Activated CD8-positive, alpha-beta T cell treated with anti-CD3 and anti-CD28 coated beads, Interleukin-2, amount 10 ng/mL, durations not matched to agents 7 days and 5 days (primary cell): ENCODE measurements at regions of chr5 and their contacts with region 1.

Region 1: GRCh38 chr5:73591102-73591695 is 25.7 kb downstream of the UTP15 start:
- DNase-seq: peak; percentile 75
- ATAC-seq: peak; percentile 71
- H3K4me3 Mint-ChIP-seq: no peak overlapping the region
- H3K27ac Mint-ChIP-seq: no peak overlapping the region
- H3K4me1 Mint-ChIP-seq: no peaks in the 10 kb centered on the region
- H3K27me3 Mint-ChIP-seq: peaks cover 2% of the 10 kb centered on the region

Region 2: DNA sequence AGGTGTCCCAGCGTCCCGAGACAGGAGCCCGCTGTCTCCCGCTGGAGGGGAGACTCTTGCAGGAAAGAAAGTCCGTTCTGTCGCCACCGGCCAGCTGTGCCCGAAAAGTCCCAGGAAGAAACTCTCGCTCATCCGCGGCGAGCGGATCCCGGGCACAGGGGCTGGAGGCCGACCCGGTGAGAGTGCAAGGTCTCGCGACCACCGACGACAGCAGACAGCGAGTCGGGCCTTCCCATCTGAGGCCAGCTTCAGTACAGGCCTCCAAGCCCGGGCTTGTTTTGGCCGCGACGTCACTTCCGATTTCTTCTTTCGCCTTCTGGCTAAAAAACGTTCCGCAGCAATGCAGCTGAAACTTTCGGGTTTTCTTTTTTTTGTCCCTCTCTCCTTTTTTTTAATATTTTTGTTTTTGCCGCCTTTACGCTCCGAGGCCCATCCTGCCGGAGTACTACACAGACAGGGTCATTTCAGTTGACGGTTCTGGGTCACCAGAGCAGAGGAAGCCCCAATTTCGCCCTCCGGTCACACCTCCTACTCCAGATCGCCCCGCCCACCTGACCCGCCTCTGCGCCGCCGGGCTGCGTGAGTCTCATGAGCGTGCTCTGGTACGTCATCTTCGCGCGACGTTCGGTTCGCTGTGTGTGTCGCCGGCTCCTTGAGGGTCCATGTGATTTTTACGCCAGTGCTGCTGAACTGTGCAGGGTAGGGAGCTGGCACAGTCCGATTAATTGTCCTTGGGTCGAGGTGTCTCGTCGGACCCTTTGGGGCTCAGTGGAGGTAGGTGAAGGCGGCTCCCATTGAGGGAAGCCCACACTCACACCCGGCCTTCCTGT is 25.8 kb before region 1 on chr5 and contains the starts of genes ANKRA2 and UTP15:
- CTCF ChIA-PET with region 1: interaction called, 14 read pairs
- POLR2A ChIA-PET with region 1: no interaction called
- DNase-seq: peak; percentile 99
- ATAC-seq: peak; percentile 93
- H3K4me3 Mint-ChIP-seq: peak within 1 kb of the TSS; percentile 91
- H3K27ac Mint-ChIP-seq: peak within 1 kb of the TSS; percentile 99
- H3K4me1 Mint-ChIP-seq: peaks cover 41% of the 10 kb centered on the region
- H3K27me3 Mint-ChIP-seq: no peaks in the 10 kb centered on the region
- total RNA-seq, gene ANKRA2: 12.4 to 13.4 TPM
- total RNA-seq, gene UTP15: 22.9 to 23.8 TPM

Region 3: DNA sequence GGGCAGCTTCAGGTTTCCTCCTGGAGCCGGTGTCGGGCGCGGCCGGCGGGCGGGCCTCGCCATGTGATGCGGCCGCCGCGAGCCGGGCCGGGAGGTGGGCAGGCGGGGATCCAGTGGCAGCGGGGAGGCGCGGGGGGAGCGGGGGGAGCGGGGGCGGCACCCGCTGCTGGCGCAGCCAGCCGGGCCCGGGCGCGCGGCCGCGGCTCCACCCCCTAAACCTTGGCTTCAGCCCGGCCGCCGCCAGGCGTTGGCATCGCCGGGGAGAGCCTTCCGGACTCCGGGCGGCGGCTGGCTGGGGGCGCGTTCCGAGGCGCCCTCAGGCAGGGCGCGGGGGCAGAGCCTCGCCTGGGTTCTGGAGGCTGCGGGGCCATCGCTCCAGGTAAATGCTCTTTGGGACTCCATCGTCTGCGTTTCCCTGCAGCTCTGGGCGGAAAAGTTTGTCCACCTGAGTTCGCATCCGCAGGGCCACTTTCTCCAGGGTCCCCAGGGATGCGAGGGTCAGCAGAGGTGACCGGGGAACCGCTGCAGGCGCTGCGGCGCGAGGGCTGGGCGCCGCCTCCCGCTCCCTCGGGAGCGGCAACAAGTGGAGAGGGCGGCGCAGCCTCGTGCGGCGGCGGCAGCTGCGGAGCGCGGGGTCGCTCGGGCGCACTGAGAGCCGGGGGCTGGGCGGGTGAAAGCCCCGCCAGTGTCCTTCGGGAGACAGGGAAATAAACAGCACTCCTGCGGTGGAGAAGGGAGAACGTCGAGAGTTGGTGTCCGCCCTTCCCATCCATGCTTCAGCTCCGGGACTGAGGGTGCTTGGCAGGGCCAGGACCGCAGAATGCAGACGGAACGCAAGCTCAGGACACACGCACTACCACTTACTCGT is 35.0 kb after region 1 on chr5 and contains the start of gene ARHGEF28:
- CTCF ChIA-PET with region 1: interaction called, 10 read pairs
- POLR2A ChIA-PET with region 1: no interaction called
- DNase-seq: peak; percentile 23
- ATAC-seq: peak; percentile 86
- H3K4me3 Mint-ChIP-seq: peak within 1 kb of the TSS; percentile 48
- H3K27ac Mint-ChIP-seq: no peak within 1 kb of the TSS
- H3K4me1 Mint-ChIP-seq: peaks cover 3% of the 10 kb centered on the region
- H3K27me3 Mint-ChIP-seq: peaks cover 60% of the 10 kb centered on the region
- total RNA-seq, gene ARHGEF28: not detected

Region 4: DNA sequence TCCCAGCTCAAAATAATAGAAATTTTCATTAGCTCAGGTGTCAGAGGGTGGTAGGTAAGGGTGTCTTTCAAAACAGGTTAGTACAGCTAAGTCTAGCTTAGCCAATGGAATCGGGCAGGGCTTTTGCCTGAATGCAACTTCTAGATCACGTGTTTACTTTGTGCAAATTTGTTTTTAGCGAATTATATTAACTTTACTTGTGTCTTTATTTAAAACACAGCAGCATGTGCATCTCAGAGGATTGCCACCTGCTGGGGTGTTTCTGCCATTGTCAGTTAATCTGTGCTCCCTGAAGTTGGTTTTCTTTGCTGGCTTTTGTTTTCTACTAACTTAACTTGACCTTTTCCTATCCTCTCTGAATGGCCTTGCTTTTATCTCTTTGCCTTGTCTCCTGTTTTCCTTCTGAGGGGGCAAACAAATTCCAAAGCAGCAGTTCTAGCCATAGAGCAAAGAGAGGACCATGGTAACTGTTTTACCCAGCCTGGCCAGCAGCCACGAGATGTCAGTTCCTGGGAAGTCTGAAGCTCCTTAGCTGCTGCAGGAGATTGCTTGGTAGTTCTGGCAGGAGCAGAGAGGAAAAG is 102.4 kb after region 1 on chr5:
- CTCF ChIA-PET with region 1: interaction called, 28 read pairs
- POLR2A ChIA-PET with region 1: no interaction called
- DNase-seq: no peak
- ATAC-seq: no peak
- H3K4me3 Mint-ChIP-seq: no peak overlapping the region
- H3K27ac Mint-ChIP-seq: no peak overlapping the region
- H3K4me1 Mint-ChIP-seq: peaks cover 11% of the 10 kb centered on the region
- H3K27me3 Mint-ChIP-seq: peaks cover 19% of the 10 kb centered on the region

Region 5: DNA sequence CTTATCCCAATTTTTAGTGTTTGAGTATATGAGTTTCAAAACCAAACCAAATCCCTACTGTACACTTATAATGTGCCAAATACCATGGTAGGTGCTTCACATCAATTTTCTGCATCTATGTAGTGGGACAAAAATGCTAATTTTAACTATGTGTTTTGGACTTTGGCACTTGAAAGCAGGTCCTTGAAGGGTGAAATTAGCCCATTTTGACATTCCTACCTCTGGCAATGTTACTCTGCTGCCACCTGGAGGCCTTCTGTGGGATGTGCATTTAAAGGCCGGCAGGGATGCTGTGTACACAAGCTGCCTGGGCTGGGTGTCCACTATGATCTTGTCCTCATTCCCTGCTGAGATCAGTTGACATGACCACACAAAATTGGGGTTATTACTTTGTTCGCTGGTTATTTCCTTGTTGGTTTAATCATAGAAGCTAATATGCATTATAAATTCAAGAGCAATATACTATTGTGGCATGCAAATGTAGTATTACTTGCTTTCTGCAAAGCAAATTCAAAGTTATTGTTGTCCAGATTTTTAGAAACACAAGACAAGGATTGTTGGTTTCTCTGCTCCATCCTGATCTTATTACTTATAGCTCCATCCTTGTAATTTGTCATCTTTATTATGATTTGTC is 201.6 kb after region 1 on chr5:
- CTCF ChIA-PET with region 1: interaction called, 138 read pairs
- POLR2A ChIA-PET with region 1: no interaction called
- DNase-seq: peak; percentile 75
- ATAC-seq: peak; percentile 63
- H3K4me3 Mint-ChIP-seq: no peak overlapping the region
- H3K27ac Mint-ChIP-seq: no peak overlapping the region
- H3K4me1 Mint-ChIP-seq: no peaks in the 10 kb centered on the region
- H3K27me3 Mint-ChIP-seq: peaks cover 14% of the 10 kb centered on the region